ENCODE measurements at regions of chr2 and their contacts with region 1.

Region 1: GRCh38 chr2:233976690-233977294 is 59.6 kb downstream of the TRPM8 start:
- DNase-seq: peak; percentile 30
- H3K4me3 ChIP-seq: no peak overlapping the region
- H3K27ac ChIP-seq: no peak overlapping the region
- H3K4me1 ChIP-seq: no peaks in the 10 kb centered on the region
- H3K27me3 ChIP-seq: no peaks in the 10 kb centered on the region
- CTCF ChIP-seq: peak in 3 of 4 experiments; percentile 31 to 55 (median 43)
- POLR2A ChIP-seq: no peak

Region 2: GRCh38 chr2:234544659-234545611 is 568.1 kb after region 1 on chr2:
- intact Hi-C with region 1: loop called (anchors 10 kb)
- DNase-seq: peak; percentile 33
- H3K4me3 ChIP-seq: no peak overlapping the region
- H3K27ac ChIP-seq: no peak overlapping the region
- H3K4me1 ChIP-seq: no peaks in the 10 kb centered on the region
- H3K27me3 ChIP-seq: no peaks in the 10 kb centered on the region
- CTCF ChIP-seq: peak; percentile 81 to 87 (median 83)
- POLR2A ChIP-seq: no peak

Measured in prostate gland (tissue), 2 donors.